GM12878 (cell line): ENCODE measurements at regions of chr2 and their contacts with region 1.

Region 1: DNA sequence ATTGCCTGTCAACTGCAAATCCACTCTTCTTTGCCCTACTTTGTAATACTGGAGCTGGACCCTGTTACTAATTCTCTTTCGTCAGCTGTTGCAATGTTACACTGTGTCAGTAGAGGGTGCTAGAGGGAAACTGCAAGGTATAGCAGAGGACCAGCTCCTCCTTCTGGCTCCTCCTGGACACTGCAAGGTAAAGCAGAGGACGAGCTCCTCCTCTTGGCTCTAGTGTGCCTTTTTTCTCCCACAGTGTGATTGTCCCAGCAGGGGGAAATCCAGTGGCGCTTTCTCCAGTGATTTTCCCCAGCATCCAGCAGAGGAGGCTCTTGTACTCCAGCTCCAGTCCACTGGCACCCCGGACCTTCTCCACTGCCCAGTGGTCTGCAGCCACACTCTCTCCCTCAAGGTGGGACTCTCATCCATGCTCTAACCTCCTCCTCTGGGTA is 95.6 kb downstream of the CAPN13 start:
- DNase-seq: peak; percentile 59
- ATAC-seq: peak; percentile 72
- H3K4me3 ChIP-seq: no peak overlapping the region
- H3K27ac ChIP-seq: no peak overlapping the region
- H3K4me1 ChIP-seq: peaks cover 13% of the 10 kb centered on the region
- H3K27me3 ChIP-seq: no peaks in the 10 kb centered on the region
- CTCF ChIP-seq: peak; percentile 100; a peak in 5 of 6 replicates
- EP300 ChIP-seq: no peak
- POLR2A ChIP-seq: no peak
- RAD21 ChIP-seq: peak; percentile 96

Region 2: GRCh38 chr2:30089171-30089570 is 622.5 kb before region 1 on chr2:
- CTCF ChIA-PET with region 1: interaction called, 22 read pairs
- POLR2A ChIA-PET with region 1: no interaction called
- RAD21 ChIA-PET with region 1: interaction called, 9 read pairs
- SMC1A ChIA-PET with region 1: interaction called, 4 read pairs
- in situ Hi-C with region 1: no loop called
- intact Hi-C with region 1: loop called (anchors 2 kb)
- DNase-seq: no peak
- ATAC-seq: no peak
- H3K4me3 ChIP-seq: no peak overlapping the region
- H3K27ac ChIP-seq: no peak overlapping the region
- H3K4me1 ChIP-seq: no peaks in the 10 kb centered on the region
- H3K27me3 ChIP-seq: no peaks in the 10 kb centered on the region; a peak in 1 of 4 replicates
- CTCF ChIP-seq: no peak
- EP300 ChIP-seq: no peak
- POLR2A ChIP-seq: no peak
- RAD21 ChIP-seq: no peak

Region 3: DNA sequence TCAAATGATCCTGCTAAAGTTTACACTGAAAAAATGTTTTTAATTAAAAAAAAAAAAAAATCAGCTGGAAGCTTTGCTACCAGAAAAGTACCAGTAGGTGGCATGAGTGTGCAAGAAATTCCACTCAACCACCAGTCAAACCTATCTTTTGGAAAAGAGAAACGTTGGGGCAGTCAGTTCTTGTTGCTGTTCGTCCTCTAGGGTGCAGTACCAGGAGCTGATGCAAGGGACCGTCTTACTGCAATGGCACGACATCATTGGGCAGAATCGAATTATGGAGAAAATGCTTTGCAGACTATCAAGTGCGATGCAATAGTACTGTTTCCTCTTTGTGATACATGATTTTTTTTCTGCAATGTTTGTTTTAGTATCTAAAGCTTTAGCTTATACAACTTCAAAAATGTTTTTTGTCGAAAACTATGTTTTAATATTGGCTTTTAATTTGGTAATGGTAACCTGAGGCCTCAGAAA is 546.6 kb before region 1 on chr2:
- CTCF ChIA-PET with region 1: interaction called, 724 read pairs
- POLR2A ChIA-PET with region 1: interaction called, 11 read pairs
- RAD21 ChIA-PET with region 1: interaction called, 420 read pairs
- SMC1A ChIA-PET with region 1: interaction called, 379 read pairs
- in situ Hi-C with region 1: loop called (anchors 5 kb)
- intact Hi-C with region 1: loop called (anchors 1 kb)
- DNase-seq: peak; percentile 57
- ATAC-seq: peak; percentile 99
- H3K4me3 ChIP-seq: no peak overlapping the region
- H3K27ac ChIP-seq: no peak overlapping the region
- H3K4me1 ChIP-seq: no peaks in the 10 kb centered on the region; the same call in 1 of the 2 replicates
- H3K27me3 ChIP-seq: peaks cover 0 to 2% of the 10 kb centered on the region in 2 experiments; a peak in 1 of 4 replicates
- CTCF ChIP-seq: peak; percentile 71 to 91 (median 89)
- EP300 ChIP-seq: no peak
- POLR2A ChIP-seq: no peak
- RAD21 ChIP-seq: peak; percentile 92

Region 4: DNA sequence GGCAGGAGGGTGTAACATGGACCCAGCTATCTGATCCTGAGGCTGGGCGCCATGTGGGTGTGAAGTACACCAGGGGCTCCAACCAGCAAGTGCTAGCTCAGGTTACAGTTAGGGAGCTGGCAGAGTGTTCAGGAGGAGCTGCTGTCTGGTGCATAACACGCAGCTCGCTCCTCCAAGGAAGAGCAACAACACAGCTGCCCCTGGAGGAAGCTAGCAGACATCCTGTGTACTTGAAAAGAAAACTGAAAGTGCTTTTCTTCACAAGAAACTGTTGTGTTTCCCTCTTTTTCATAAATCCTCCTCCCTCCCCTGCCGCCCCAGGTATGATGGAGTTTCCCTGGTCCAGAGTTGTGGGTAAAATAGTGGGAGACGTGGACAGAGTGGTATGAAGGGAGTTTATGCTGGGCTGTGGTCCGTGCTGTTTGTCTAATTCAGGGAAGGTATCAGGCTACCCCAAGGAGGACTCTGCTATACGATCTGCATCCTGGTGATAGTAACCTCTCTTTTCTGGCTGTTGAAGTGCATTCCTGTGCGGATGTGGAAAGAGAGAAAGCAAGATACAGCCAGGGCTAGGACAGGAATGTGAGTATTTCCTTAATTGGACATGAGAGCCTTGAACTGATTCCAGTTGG is 486.4 kb before region 1 on chr2:
- CTCF ChIA-PET with region 1: interaction called, 14 read pairs
- POLR2A ChIA-PET with region 1: interaction called, 3 read pairs
- RAD21 ChIA-PET with region 1: interaction called, 11 read pairs
- SMC1A ChIA-PET with region 1: interaction called, 9 read pairs
- in situ Hi-C with region 1: no loop called
- intact Hi-C with region 1: no loop called
- DNase-seq: no peak
- ATAC-seq: peak; percentile 72
- H3K4me3 ChIP-seq: peak overlapping the region; percentile 56
- H3K27ac ChIP-seq: peak overlapping the region; percentile 95
- H3K4me1 ChIP-seq: peaks cover 45% of the 10 kb centered on the region
- H3K27me3 ChIP-seq: no peaks in the 10 kb centered on the region
- CTCF ChIP-seq: 0 out of 6 replicates have a peak, but pooled peaks of 1 of the 3 experiments have one; percentile 7
- EP300 ChIP-seq: no peak
- POLR2A ChIP-seq: peak; percentile 60
- RAD21 ChIP-seq: no peak

Region 5: DNA sequence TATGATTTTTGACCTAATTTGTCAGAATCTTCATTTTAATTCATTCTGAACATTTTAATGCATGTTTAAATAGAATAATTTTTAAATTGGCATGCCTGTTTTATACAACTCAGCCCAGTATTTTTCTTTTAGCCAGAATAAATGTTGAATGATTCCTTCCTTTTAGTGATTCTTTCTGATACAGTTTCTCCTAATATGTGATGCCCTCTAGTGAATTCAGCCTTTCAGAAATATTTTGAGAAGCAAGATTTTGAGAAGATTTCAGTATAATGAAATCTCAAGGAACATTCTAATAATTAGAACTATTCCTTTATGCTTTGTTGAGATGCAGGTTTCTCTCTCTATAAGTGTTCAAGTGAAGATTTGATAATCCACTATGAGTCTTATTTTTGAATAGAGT is 236.1 kb before region 1 on chr2:
- CTCF ChIA-PET with region 1: interaction called, 16 read pairs
- POLR2A ChIA-PET with region 1: no interaction called
- RAD21 ChIA-PET with region 1: interaction called, 7 read pairs
- SMC1A ChIA-PET with region 1: interaction called, 17 read pairs
- in situ Hi-C with region 1: no loop called
- intact Hi-C with region 1: no loop called
- DNase-seq: no peak
- ATAC-seq: no peak
- H3K4me3 ChIP-seq: no peak overlapping the region
- H3K27ac ChIP-seq: no peak overlapping the region
- H3K4me1 ChIP-seq: peaks cover 3% of the 10 kb centered on the region; the same call in 1 of the 2 replicates
- H3K27me3 ChIP-seq: no peaks in the 10 kb centered on the region
- CTCF ChIP-seq: no peak; a peak in 1 of 6 replicates
- EP300 ChIP-seq: no peak
- POLR2A ChIP-seq: no peak
- RAD21 ChIP-seq: peak; percentile 35

Region 6: GRCh38 chr2:30691948-30692828 is 19.5 kb before region 1 on chr2:
- CTCF ChIA-PET with region 1: interaction called, 39 read pairs
- POLR2A ChIA-PET with region 1: no interaction called
- RAD21 ChIA-PET with region 1: interaction called, 8 read pairs
- SMC1A ChIA-PET with region 1: interaction called, 12 read pairs
- in situ Hi-C with region 1: no loop called
- intact Hi-C with region 1: no loop called
- DNase-seq: no peak
- ATAC-seq: peak; percentile 85
- H3K4me3 ChIP-seq: no peak overlapping the region
- H3K27ac ChIP-seq: no peak overlapping the region
- H3K4me1 ChIP-seq: no peaks in the 10 kb centered on the region
- H3K27me3 ChIP-seq: no peaks in the 10 kb centered on the region; a peak in 1 of 4 replicates
- CTCF ChIP-seq: peak; percentile 13 to 36 (median 27); a peak in 4 of 6 replicates
- EP300 ChIP-seq: no peak
- POLR2A ChIP-seq: no peak
- RAD21 ChIP-seq: peak; percentile 70

Region 7: GRCh38 chr2:30758191-30758651 is 46.6 kb after region 1 on chr2:
- CTCF ChIA-PET with region 1: no interaction called
- POLR2A ChIA-PET with region 1: no interaction called
- RAD21 ChIA-PET with region 1: no interaction called
- SMC1A ChIA-PET with region 1: no interaction called
- in situ Hi-C with region 1: no loop called
- intact Hi-C with region 1: no loop called
- DNase-seq: no peak
- ATAC-seq: no peak
- H3K4me3 ChIP-seq: no peak overlapping the region
- H3K27ac ChIP-seq: no peak overlapping the region
- H3K4me1 ChIP-seq: no peaks in the 10 kb centered on the region
- H3K27me3 ChIP-seq: no peaks in the 10 kb centered on the region; a peak in 2 of 4 replicates
- CTCF ChIP-seq: no peak
- EP300 ChIP-seq: no peak
- POLR2A ChIP-seq: no peak
- RAD21 ChIP-seq: no peak

Region 8: DNA sequence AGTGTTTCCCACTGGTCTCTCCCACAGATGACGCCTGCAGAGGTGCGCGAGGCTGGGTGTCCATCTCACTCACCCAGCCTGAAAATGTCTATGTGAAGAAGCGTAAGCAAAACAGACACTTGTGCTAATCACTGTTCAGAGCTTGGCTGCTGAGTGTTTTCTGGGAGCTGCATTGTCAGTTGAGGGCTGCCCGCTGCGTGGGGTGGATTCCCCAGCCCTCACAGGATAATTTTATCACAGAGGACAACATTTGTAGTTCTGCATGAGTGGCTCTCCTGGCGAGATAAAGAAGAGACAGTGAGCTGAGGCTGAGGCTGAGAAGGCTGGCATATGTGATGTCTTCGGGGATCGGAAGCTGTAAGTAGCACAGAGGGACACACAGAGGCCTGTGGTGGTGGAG is 111.8 kb after region 1 on chr2:
- CTCF ChIA-PET with region 1: no interaction called
- POLR2A ChIA-PET with region 1: no interaction called
- RAD21 ChIA-PET with region 1: no interaction called
- SMC1A ChIA-PET with region 1: no interaction called
- in situ Hi-C with region 1: no loop called
- intact Hi-C with region 1: no loop called
- DNase-seq: no peak
- ATAC-seq: no peak
- H3K4me3 ChIP-seq: no peak overlapping the region
- H3K27ac ChIP-seq: no peak overlapping the region
- H3K4me1 ChIP-seq: no peaks in the 10 kb centered on the region
- H3K27me3 ChIP-seq: no peaks in the 10 kb centered on the region
- CTCF ChIP-seq: no peak
- EP300 ChIP-seq: no peak
- POLR2A ChIP-seq: no peak
- RAD21 ChIP-seq: no peak

Region 9: GRCh38 chr2:31434911-31435310 is 723.2 kb after region 1 on chr2:
- CTCF ChIA-PET with region 1: no interaction called
- POLR2A ChIA-PET with region 1: no interaction called
- RAD21 ChIA-PET with region 1: no interaction called
- SMC1A ChIA-PET with region 1: no interaction called
- in situ Hi-C with region 1: no loop called
- intact Hi-C with region 1: loop called (anchors 10 kb)
- DNase-seq: no peak
- ATAC-seq: peak; percentile 49; the same call in 2 of the 3 replicates
- H3K4me3 ChIP-seq: no peak overlapping the region
- H3K27ac ChIP-seq: no peak overlapping the region
- H3K4me1 ChIP-seq: no peaks in the 10 kb centered on the region
- H3K27me3 ChIP-seq: no peaks in the 10 kb centered on the region
- CTCF ChIP-seq: peak in 1 of 3 experiments; percentile 26; a peak in 1 of 6 replicates
- EP300 ChIP-seq: no peak
- POLR2A ChIP-seq: no peak
- RAD21 ChIP-seq: peak; percentile 28; the same call in 1 of the 2 replicates